ENCODE measurements at regions of chr14 and their contacts with region 1.

Region 1: GRCh38 chr14:102086972-102087761 is at the start of gene HSP90AA1:
- DNase-seq: peak; percentile 94
- ATAC-seq: peak; percentile 76
- H3K4me3 Mint-ChIP-seq: peak within 1 kb of the TSS; percentile 97
- H3K27ac Mint-ChIP-seq: peak within 1 kb of the TSS; percentile 96
- H3K4me1 Mint-ChIP-seq: peaks cover 53% of the 10 kb centered on the region
- H3K27me3 Mint-ChIP-seq: no peaks in the 10 kb centered on the region
- CTCF ChIP-seq: no peak
- total RNA-seq, gene HSP90AA1: 808 to 842 TPM (median 832 TPM) in 3 replicates

Region 2: GRCh38 chr14:102071283-102071998 is 15.7 kb before region 1 on chr14:
- CTCF ChIA-PET with region 1: no interaction called
- POLR2A ChIA-PET with region 1: no interaction called
- DNase-seq: no peak
- ATAC-seq: no peak
- H3K4me3 Mint-ChIP-seq: no peak overlapping the region
- H3K27ac Mint-ChIP-seq: no peak overlapping the region
- H3K4me1 Mint-ChIP-seq: no peaks in the 10 kb centered on the region
- H3K27me3 Mint-ChIP-seq: no peaks in the 10 kb centered on the region
- CTCF ChIP-seq: no peak

Region 3: DNA sequence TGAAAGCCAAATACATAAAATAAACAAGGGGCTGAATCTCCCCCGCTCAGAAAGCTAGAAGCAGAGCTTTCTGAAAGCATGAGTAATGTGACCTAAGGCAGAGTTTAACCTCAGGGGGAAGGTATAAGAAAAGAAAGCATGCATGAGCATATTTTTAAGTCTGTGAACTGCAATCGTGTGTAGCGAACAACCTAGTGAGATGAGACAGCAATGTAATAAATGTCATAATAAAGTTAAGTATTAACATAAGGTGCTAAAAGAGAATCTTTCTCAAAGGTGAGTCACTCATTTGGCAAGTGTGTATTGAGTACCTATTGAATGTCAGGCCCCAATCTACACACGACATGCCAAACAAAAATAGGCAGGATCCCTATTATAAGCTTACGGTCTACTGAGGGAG is 38.4 kb after region 1 on chr14:
- CTCF ChIA-PET with region 1: no interaction called
- POLR2A ChIA-PET with region 1: interaction called, 11 read pairs
- DNase-seq: no peak
- ATAC-seq: peak; percentile 22; the same call in 1 of the 2 replicates
- H3K4me3 Mint-ChIP-seq: no peak overlapping the region
- H3K27ac Mint-ChIP-seq: peak overlapping the region; percentile 38
- H3K4me1 Mint-ChIP-seq: peaks cover 20% of the 10 kb centered on the region
- H3K27me3 Mint-ChIP-seq: no peaks in the 10 kb centered on the region
- CTCF ChIP-seq: no peak